ENCODE measurements at regions of chr2 and their contacts with region 1.

Region 1: DNA sequence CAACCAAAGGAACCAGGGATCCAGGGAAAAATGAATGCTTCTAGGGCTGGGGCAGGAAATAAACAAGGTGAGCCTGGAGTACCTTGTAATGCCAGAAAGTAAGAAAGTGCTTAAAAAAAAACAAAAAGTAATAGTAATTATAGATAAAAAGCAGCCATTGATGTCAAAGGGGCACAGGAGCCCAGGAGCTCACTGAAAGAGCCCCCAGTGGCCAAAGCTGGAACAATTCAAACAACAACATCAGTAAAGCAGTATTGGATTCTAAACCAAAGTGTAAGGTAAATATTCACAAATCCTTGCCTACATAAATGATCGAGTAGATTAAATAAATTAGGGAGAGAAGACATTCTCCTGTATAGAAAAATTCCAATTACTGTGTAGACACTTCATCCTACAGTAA is 114.3 kb upstream of the ARL4C start:
- DNase-seq: no peak
- ATAC-seq: peak; percentile 57; the same call in 1 of the 2 replicates
- H3K4me3 Mint-ChIP-seq: no peak overlapping the region
- H3K27ac Mint-ChIP-seq: no peak overlapping the region
- H3K4me1 Mint-ChIP-seq: 0 out of 2 replicates have a peak, but pooled peaks cover 4% of the 10 kb centered on the region
- H3K27me3 Mint-ChIP-seq: peaks cover 2% of the 10 kb centered on the region; the same call in 1 of the 2 replicates
- CTCF ChIP-seq: peak; percentile 40; the same call in 1 of the 2 replicates

Region 2: DNA sequence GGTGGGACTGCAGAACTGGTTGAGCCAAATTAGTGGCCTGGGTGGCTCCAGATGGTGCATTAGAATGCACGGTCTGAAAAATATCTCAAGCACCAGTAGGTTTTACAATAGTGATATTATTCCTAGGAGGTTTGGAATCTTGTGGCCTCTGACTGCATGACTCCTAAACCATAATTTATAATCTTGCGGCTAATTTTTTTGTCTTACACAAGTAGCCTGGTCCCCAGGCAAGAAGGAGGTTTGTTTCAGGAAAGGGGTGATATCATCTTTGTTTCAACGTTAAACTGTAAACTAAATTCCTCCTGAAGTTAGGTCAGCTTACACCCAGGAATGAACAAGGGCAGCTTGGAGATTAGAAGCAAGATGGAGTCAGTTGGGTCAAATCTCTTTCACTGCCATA is 15.4 kb before region 1 on chr2:
- CTCF ChIA-PET with region 1: interaction called, 15 read pairs
- POLR2A ChIA-PET with region 1: no interaction called
- DNase-seq: no peak
- ATAC-seq: no peak
- H3K4me3 Mint-ChIP-seq: no peak overlapping the region
- H3K27ac Mint-ChIP-seq: peak overlapping the region; percentile 94
- H3K4me1 Mint-ChIP-seq: peaks cover 35% of the 10 kb centered on the region
- H3K27me3 Mint-ChIP-seq: peaks cover 16% of the 10 kb centered on the region
- CTCF ChIP-seq: no peak